Naive thymus-derived CD8-positive, alpha-beta T cell (primary cell): ENCODE measurements at regions of chr4 and their contacts with region 1.

Region 1: GRCh38 chr4:1289207-1290164 is at the start of gene MAEA:
- DNase-seq: peak; percentile 93 to 98 (median 96)
- ATAC-seq: peak; percentile 97 to 98
- H3K4me3 Mint-ChIP-seq: peak within 1 kb of the TSS; percentile 84 to 94 (median 91)
- H3K27ac Mint-ChIP-seq: peak within 1 kb of the TSS; percentile 83 to 96 (median 94)
- H3K4me1 Mint-ChIP-seq: peaks cover 20 to 45% (median 41%) of the 10 kb centered on the region in 4 donors
- H3K27me3 Mint-ChIP-seq: no peaks in the 10 kb centered on the region
- polyA plus RNA-seq, gene MAEA: 56.7 to 75.1 (median 59.2) TPM

Region 2: GRCh38 chr4:1249148-1249730 is 40.2 kb before region 1 on chr4:
- POLR2A ChIA-PET with region 1: interaction called, 18 read pairs
- DNase-seq: peak; percentile 75 to 91 (median 86)
- ATAC-seq: peak; percentile 64 to 69
- H3K4me3 Mint-ChIP-seq: peak overlapping the region; percentile 83 to 95 (median 90)
- H3K27ac Mint-ChIP-seq: peak overlapping the region; percentile 90 to 97 (median 95)
- H3K4me1 Mint-ChIP-seq: peaks cover 31 to 76% (median 70%) of the 10 kb centered on the region in 4 donors
- H3K27me3 Mint-ChIP-seq: no peaks in the 10 kb centered on the region

Region 3: DNA sequence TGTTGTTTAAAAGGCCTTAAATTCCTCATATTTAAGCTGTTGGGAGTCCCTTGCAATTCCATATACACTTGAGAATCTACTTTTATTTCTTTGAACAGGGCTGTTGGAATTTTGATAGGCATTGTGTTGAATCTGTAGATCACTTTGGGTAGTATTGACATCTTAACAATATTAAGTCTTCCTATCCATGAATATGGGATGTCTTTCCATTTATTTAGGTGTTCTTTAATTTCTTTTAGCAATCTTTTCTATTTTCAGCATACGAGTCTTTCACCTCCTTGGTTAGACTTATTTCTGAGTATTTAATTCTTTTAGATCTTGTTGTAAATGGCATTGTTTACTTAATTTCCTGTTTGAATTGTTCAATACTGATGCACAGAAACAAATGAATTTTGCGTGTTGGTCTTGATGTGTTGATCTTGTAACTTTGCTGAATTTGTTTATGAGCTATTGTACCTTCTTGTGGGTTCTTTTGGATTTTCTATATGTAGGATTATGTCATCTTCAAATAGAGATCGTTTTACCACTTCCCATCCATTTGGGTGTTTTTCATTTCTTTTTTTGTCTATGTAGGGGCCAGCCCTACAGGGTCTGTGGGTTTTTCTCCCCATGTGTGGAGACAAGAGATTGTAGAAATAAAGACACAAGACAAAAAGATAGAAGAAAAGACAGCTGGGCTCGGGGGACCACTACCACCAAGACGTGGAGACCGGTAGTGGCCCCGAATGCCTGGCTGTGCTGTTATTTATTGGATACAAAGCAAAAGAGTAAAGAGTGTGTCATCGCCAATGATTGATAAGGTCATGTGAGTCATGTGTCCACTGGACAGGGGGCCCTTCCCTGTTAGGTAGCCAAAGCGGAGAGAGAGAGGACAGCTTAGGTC is 22.4 kb before region 1 on chr4:
- POLR2A ChIA-PET with region 1: interaction called, 10 read pairs
- DNase-seq: peak in 4 of 10 donors; percentile 36 to 76 (median 59)
- ATAC-seq: peak; percentile 76 to 88
- H3K4me3 Mint-ChIP-seq: peak overlapping the region; percentile 76 to 89 (median 83)
- H3K27ac Mint-ChIP-seq: peak overlapping the region; percentile 83 to 99 (median 97)
- H3K4me1 Mint-ChIP-seq: peaks cover 11 to 26% (median 21%) of the 10 kb centered on the region in 4 donors
- H3K27me3 Mint-ChIP-seq: no peaks in the 10 kb centered on the region

Region 4: DNA sequence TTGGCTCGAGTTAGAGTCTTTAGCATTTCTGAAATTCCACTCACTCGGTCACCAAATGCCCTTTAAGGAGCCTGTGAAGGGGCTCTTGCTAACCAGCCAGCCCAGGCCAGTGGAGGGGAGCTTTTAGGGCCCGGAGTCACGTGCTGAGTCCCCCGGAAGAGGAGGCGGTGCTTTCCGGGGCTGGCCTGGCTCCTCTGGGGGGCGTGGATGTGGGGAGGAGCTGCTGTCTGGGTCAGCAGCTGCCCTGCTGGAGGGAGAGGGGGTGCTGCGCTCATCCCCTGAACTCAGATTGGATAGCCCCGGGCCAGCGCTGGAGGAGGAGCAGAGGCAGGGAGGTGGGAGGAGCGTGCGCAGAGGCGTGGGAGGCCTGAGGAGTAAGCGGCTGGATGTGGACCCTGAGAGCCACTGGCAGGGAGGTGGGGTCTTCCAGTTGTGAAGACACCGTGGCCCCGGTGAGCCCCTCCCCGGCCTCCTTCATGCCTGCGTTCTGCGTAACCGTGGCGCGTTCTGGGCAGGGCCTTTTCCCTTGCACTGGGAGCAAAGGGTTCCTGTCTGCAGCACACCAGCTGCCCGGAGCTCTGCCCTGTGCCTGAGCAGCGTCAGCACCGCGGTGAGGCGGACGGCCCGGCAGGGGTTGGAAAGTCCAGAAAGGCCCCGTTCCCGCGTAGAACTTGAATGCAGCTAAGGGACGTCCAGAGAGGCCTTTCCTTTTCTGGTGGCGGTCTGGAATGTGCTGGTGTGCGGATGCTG is 19.9 kb after region 1 on chr4:
- POLR2A ChIA-PET with region 1: interaction called, 11 read pairs
- DNase-seq: peak; percentile 38 to 82 (median 46)
- ATAC-seq: peak; percentile 76 to 77
- H3K4me3 Mint-ChIP-seq: peak overlapping the region; percentile 76 to 91 (median 84)
- H3K27ac Mint-ChIP-seq: peak overlapping the region; percentile 74 to 91 (median 86)
- H3K4me1 Mint-ChIP-seq: peaks cover 26 to 76% (median 66%) of the 10 kb centered on the region in 4 donors
- H3K27me3 Mint-ChIP-seq: no peaks in the 10 kb centered on the region

Region 5: GRCh38 chr4:1329408-1330371 is 40.2 kb after region 1 on chr4:
- POLR2A ChIA-PET with region 1: interaction called, 11 read pairs
- DNase-seq: peak in 9 of 10 donors; percentile 33 to 79 (median 57)
- ATAC-seq: peak; percentile 64 to 79
- H3K4me3 Mint-ChIP-seq: peak overlapping the region in 9 of 10 donors; percentile 40 to 80 (median 76)
- H3K27ac Mint-ChIP-seq: peak overlapping the region; percentile 87 to 98 (median 95)
- H3K4me1 Mint-ChIP-seq: peaks cover 17 to 43% (median 32%) of the 10 kb centered on the region in 4 donors
- H3K27me3 Mint-ChIP-seq: no peaks in the 10 kb centered on the region

Region 6: GRCh38 chr4:1346781-1347409 is 57.4 kb after region 1 on chr4 and contains the start of gene UVSSA:
- POLR2A ChIA-PET with region 1: interaction called, 42 read pairs
- DNase-seq: peak; percentile 98 to 100 (median 100)
- ATAC-seq: peak; percentile 89 to 93
- H3K4me3 Mint-ChIP-seq: peak within 1 kb of the TSS; percentile 83 to 98 (median 94)
- H3K27ac Mint-ChIP-seq: peak within 1 kb of the TSS; percentile 84 to 99 (median 96)
- H3K4me1 Mint-ChIP-seq: peaks cover 17 to 48% (median 39%) of the 10 kb centered on the region in 4 donors
- H3K27me3 Mint-ChIP-seq: no peaks in the 10 kb centered on the region
- polyA plus RNA-seq, gene UVSSA: 1.9 to 6.2 (median 2.4) TPM

Region 7: DNA sequence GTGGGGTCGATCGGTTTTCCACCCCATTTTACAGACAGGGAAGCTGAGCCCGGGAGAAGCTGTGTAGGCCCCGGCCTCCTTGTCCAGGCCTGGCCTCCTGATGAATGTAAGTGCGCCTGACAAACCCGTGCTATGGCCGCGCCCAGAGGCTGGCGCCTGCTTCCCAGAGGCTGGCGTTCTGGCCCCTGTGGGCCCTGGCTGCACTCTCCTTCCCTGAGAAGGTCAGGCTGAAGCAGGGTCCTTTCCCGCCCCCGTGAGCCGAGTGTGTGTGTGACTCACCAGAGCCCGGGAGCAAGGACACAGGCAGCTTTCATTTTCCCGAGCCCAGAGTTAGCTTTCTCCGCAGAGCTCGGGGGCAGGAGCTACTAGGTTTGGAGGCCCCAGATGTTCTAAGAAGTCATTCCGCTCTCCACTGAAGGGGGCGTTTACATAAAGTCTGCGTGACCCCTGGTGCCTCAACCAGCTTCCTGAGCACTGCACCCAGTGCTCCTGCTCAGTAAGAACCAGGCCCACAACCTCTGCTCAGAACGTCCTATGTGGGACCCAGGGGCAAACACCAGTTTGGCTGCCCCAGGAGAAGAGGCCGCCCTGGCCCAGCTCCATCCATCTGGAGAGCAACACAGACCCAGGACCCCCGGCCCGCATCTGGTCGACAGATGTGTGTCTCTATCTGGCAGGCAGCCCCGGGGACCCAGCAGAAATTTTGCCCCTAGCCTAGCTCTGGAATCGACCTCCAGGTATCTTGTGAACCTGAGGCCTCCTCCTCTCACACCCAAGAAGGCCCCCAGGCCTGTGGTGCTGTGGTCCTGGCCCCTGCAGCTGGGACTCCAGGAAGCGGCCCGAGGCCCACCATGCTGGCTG is 71.2 kb after region 1 on chr4:
- POLR2A ChIA-PET with region 1: no interaction called
- DNase-seq: no peak
- ATAC-seq: no peak
- H3K4me3 Mint-ChIP-seq: no peak overlapping the region
- H3K27ac Mint-ChIP-seq: no peak overlapping the region
- H3K4me1 Mint-ChIP-seq: peaks cover 0 to 2% (median 2%) of the 10 kb centered on the region in 4 donors
- H3K27me3 Mint-ChIP-seq: no peaks in the 10 kb centered on the region

Region 8: DNA sequence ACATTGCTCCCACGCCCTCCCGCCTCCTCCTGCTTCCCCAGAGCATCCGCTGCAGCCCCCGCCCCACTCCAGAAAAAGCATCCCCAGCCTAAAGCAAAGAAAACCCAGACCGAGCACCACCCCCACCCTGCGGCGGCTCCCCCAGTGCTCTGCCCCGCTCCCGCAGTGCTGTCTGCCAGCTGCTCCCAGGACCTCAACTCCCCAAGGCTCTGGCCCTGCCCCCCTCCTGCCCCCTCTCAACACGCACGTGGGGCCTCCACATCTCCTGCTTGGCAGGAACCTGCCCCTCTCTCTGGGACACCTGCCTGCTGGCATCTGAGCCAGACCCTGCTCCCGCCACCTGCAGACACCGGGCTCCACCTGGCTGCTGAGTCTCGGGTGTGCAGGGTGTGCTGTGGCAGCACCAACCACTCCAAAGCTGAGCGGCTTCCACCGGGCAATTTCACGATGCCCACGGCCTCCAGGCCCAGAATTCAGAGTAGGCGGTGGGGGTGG is 315.3 kb after region 1 on chr4:
- POLR2A ChIA-PET with region 1: interaction called, 13 read pairs
- DNase-seq: peak in 7 of 10 donors; percentile 11 to 89 (median 61)
- ATAC-seq: peak; percentile 59 to 88
- H3K4me3 Mint-ChIP-seq: peak overlapping the region in 9 of 10 donors; percentile 15 to 86 (median 77)
- H3K27ac Mint-ChIP-seq: peak overlapping the region in 9 of 10 donors; percentile 53 to 95 (median 92)
- H3K4me1 Mint-ChIP-seq: peaks cover 3 to 36% (median 20%) of the 10 kb centered on the region in 4 donors
- H3K27me3 Mint-ChIP-seq: peaks cover 0 to 10% (median 0%) of the 10 kb centered on the region in 5 donors